Endothelial cell of umbilical vein (primary cell): ENCODE measurements at regions of chr4 and their contacts with region 1.

Region 1: DNA sequence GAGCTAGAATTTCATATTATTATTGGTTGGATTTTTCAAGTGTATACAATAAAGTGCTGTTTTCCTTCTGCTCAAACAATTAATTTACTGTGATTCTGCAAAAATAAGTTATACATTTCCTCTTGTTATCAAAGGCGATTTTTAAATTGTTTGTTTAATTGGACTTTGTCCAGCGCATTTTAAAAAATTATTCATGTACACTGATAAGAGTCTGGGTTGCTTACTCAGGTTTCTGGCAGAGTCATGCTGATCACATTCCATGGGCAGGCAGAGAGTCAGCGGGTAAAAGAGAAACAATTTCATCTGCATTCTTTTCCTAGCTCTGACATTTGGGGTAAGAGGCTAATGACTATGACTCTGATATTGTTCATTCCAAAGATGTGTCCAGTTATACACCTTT is 8.9 kb downstream of the FAT4 start:
- DNase-seq: peak; percentile 88
- H3K4me3 ChIP-seq: peak overlapping the region in 2 of 3 experiments; percentile 5 to 46
- H3K27ac ChIP-seq: peak overlapping the region; percentile 56
- H3K4me1 ChIP-seq: peaks cover 56% of the 10 kb centered on the region
- H3K27me3 ChIP-seq: no peaks in the 10 kb centered on the region
- CTCF ChIP-seq: no peak
- POLR2A ChIP-seq: no peak

Region 2: DNA sequence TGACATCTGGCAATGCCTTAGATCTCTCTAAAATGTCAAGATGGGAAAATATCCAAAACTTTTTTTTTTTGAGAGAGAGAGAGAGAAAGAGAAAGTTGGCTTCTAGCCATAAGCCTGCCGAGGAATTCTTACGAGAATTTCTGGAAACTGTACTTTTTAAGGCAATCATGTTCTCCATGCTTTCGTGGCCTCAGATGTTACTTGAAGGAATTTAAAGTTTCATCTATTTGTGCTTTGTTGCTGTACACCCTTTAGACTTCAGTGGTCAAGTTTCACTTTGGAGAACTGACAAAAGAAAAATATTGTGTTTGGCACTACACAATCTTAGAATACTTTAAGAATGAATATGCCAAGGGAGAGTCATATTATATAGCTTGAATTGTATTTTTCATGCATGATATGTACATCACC is 45.0 kb after region 1 on chr4:
- CTCF ChIA-PET with region 1: interaction called, 3 read pairs
- POLR2A ChIA-PET with region 1: interaction called, 4 read pairs
- dilution Hi-C with region 1: no loop called
- intact Hi-C with region 1: loop called (anchors 1 kb)
- DNase-seq: peak; percentile 84
- H3K4me3 ChIP-seq: peak overlapping the region; percentile 21 to 73 (median 32)
- H3K27ac ChIP-seq: peak overlapping the region; percentile 74
- H3K4me1 ChIP-seq: peaks cover 19% of the 10 kb centered on the region
- H3K27me3 ChIP-seq: no peaks in the 10 kb centered on the region
- CTCF ChIP-seq: no peak
- POLR2A ChIP-seq: no peak